Activated naive CD4-positive, alpha-beta T cell treated with anti-CD3 and anti-CD28 coated beads for 36 hours (primary cell): ENCODE measurements at regions of chr5 and their contacts with region 1.

Region 1: DNA sequence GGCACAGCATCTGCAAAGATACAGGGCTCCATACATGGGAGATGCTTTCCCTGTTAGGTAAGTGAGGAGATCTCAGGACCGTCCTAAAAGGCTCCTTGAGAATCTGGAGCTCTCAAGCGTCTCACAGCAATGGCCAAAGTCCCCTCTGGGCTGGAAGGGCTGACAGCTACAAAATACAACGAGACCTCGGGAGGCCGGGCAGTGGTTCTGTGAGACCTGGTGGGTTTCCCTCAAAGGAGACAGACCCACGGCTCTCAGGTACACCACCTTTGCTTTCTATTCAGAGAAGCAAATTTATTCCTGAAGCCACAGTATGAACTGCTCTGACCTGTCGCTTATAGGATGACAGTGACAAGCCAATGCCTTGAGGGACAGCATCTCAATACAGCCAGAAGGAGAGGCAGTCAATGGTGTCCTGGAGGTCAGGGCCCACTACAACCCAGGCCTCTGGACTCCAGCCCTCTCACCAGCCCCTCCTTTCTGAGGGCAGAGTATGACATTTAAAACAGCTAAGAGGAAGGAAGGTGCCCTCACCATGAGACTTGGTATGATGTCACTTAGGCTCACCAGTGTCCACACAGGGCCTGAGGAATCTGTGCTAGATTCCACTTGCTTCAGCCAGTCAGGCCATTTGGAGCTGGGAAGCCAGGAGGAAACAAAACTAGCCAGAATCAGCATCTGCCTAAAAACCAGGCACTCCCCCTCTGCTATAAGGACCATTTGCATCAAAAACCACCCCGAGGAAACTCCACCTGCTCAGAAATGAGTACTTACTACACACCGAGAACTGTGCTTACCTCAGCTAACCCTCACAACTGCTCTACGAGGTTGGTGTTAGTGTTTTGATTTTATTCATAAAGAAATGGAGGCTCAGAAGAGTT is 86.5 kb upstream of the FSTL4 start:
- DNase-seq: peak; percentile 73
- H3K4me3 Mint-ChIP-seq: no peak overlapping the region
- H3K27ac Mint-ChIP-seq: peak overlapping the region; percentile 59
- H3K4me1 Mint-ChIP-seq: peaks cover 15% of the 10 kb centered on the region
- H3K27me3 Mint-ChIP-seq: peaks cover 5% of the 10 kb centered on the region

Region 2: DNA sequence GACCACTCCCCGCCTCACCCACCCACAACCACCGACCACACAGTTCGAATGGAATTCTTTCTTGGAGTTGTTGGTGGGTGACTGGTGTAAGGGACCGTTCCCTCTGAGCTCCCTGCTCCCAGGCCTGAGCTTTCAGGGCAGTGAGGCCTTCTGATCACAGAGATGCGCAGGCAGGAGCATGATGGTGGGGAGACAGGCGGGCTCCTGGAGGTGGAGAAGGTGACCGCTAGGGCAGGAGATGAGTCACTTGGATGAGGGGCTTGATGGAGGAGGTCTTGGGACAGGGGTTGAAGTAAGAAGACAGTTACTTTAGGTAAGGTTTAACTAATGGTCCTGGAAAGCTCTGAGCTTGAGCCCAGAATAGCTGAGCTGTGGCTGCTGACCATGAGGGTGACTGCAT is 558.6 kb before region 1 on chr5:
- CTCF ChIA-PET with region 1: no interaction called
- intact Hi-C with region 1: no loop called
- DNase-seq: no peak
- H3K4me3 Mint-ChIP-seq: no peak overlapping the region
- H3K27ac Mint-ChIP-seq: no peak overlapping the region
- H3K4me1 Mint-ChIP-seq: no peaks in the 10 kb centered on the region
- H3K27me3 Mint-ChIP-seq: no peaks in the 10 kb centered on the region

Region 3: DNA sequence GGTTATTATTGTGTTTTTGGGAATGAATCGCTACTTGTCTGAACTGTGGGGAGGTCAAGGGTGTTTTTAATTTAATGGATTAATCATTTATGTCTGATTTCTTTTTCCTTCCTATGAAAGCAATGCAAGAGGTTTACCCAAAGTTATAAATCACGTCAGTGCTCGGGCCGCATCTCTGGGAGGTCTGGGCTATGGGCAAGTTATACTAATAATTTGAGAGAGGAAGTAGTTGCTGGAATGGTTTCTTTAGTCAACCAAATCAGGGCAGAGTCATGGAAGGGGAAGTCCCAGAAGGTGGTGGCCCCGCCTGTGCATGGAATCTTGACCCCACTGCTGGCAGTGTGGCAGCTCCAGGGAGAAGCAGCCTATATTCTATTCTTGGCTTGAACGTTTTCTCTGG is 466.9 kb before region 1 on chr5:
- CTCF ChIA-PET with region 1: no interaction called
- intact Hi-C with region 1: no loop called
- DNase-seq: no peak
- H3K4me3 Mint-ChIP-seq: no peak overlapping the region
- H3K27ac Mint-ChIP-seq: no peak overlapping the region
- H3K4me1 Mint-ChIP-seq: no peaks in the 10 kb centered on the region
- H3K27me3 Mint-ChIP-seq: no peaks in the 10 kb centered on the region

Region 4: GRCh38 chr5:133627180-133627579 is 71.7 kb before region 1 on chr5:
- CTCF ChIA-PET with region 1: no interaction called
- intact Hi-C with region 1: loop called (anchors 1 kb)
- DNase-seq: no peak
- H3K4me3 Mint-ChIP-seq: no peak overlapping the region
- H3K27ac Mint-ChIP-seq: no peak overlapping the region
- H3K4me1 Mint-ChIP-seq: peaks cover 5% of the 10 kb centered on the region
- H3K27me3 Mint-ChIP-seq: peaks cover 46% of the 10 kb centered on the region

Region 5: DNA sequence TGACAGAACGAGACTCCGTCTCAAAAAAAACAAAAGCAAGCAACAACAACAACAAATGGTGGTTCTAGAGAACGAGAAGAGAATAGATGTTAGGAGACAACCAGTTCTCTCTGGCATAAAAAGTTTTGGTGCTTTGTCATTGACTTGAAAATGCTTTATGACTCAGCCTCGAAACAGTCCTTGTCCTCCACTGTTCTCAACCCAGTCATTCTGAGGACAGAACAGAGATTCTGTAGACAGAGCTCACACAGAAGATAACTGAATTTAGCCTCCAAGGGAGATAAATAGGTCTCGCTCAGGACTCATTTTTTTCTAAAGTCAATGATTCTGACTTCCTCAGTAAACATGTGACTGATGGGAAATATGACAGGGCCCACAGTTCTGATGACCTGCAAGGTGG is 10.5 kb before region 1 on chr5:
- CTCF ChIA-PET with region 1: no interaction called
- intact Hi-C with region 1: loop called (anchors 1 kb)
- DNase-seq: no peak
- H3K4me3 Mint-ChIP-seq: no peak overlapping the region
- H3K27ac Mint-ChIP-seq: no peak overlapping the region
- H3K4me1 Mint-ChIP-seq: no peaks in the 10 kb centered on the region
- H3K27me3 Mint-ChIP-seq: peaks cover 20% of the 10 kb centered on the region

Region 6: DNA sequence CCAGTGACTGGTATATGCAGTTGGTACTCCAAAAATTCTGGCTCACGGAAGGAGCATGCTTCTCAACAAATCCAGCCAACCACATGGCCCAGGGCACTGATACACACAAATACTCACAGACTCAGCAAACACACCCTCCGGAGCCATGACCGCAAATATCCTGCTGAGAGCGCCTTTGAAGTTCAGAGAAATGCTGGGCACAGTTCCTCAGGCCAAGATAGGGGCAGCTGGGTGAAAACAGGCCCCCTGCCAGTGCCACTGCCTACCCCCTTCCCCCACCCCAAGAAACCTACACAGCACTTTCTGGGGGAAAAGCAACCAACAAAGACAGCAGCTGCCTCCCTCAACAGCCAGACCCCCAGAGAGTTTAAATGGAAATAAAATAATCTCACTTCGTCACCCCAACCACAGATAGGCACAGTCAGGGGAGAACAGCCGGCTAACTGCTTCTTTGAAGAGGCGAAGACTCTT is 149.5 kb after region 1 on chr5:
- CTCF ChIA-PET with region 1: no interaction called
- intact Hi-C with region 1: no loop called
- DNase-seq: peak; percentile 27
- H3K4me3 Mint-ChIP-seq: no peak overlapping the region
- H3K27ac Mint-ChIP-seq: no peak overlapping the region
- H3K4me1 Mint-ChIP-seq: peaks cover 4% of the 10 kb centered on the region
- H3K27me3 Mint-ChIP-seq: peaks cover 3% of the 10 kb centered on the region

Region 7: DNA sequence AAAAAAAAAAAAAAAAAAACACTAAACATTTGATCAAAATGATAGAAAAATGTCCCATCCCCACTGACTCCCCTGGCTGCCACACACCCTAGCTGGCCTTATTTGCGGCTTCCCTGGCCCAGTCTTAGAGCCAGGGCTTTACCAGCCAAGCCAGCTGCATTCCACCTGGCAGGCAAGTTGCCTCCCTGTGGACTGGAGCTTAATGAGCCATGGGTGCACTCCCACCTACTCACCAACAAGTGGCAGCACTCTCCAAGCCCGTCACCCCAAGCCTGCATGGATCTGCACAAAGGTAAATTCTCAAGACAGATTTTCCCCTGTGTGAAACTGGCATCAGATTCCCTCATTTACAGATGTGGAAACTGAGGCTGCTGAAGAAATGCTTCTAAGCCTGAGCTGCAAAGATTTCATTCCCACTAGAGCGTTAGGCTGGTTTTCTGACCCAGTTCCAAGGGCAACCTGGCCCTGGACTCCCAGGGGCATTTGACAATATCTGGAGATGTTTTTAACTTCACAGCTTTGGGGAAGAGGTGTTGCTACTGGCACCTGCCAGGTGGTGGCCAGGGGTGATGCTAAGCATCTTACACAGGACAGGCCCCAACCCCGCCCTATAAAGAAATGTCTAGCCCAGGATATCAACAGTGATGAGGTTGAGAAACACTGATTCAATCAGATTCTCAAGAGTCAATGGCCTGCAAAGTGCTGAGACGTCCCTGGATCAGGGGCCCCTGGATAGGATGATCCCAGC is 327.8 kb after region 1 on chr5:
- CTCF ChIA-PET with region 1: no interaction called
- intact Hi-C with region 1: no loop called
- DNase-seq: peak; percentile 75
- H3K4me3 Mint-ChIP-seq: no peak overlapping the region
- H3K27ac Mint-ChIP-seq: no peak overlapping the region
- H3K4me1 Mint-ChIP-seq: peaks cover 1% of the 10 kb centered on the region
- H3K27me3 Mint-ChIP-seq: no peaks in the 10 kb centered on the region